ENCODE measurements at regions of chr1 and their contacts with region 1.

Region 1: DNA sequence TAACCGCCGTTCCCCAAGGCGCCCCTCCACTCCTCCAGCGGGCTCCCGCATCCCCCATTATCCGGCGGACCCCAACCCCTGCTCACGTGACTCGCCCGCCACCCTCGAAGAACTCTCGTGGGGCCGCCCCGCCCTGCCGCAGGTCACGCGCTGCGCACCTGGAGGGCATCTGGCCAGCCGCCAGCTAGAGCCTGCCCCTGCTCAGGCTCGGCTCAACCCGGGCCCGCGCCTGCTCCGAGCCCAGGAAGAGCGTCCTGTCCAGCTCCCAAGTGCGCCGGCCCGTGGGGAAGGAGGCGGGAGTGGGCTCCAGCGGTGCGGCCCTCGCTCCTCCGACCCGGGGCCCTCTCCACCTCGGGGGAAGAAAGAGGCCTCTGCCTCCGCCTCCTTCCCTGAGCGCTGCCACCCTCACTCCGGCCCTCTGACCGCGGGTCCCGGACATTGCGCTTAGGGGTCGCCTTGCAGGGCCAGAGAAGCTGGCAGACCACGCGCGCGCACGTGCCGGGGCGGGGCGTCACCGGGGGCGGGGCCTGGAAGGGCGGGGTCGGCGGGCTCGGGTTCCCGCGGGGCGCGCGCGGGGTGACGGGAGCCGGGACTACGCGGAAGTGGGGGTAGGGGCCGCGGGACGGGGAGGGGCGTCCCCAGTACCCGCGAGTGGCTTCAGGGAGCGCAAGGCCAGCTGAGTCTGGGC is 28.4 kb downstream of the HMGN2 start:
- DNase-seq: peak; percentile 91
- ATAC-seq: peak; percentile 78
- H3K4me3 Mint-ChIP-seq: peak overlapping the region; percentile 90
- H3K27ac Mint-ChIP-seq: peak overlapping the region; percentile 94
- H3K4me1 Mint-ChIP-seq: peaks cover 17% of the 10 kb centered on the region
- H3K27me3 Mint-ChIP-seq: no peaks in the 10 kb centered on the region
- CTCF ChIP-seq: peak; percentile 53

Region 2: DNA sequence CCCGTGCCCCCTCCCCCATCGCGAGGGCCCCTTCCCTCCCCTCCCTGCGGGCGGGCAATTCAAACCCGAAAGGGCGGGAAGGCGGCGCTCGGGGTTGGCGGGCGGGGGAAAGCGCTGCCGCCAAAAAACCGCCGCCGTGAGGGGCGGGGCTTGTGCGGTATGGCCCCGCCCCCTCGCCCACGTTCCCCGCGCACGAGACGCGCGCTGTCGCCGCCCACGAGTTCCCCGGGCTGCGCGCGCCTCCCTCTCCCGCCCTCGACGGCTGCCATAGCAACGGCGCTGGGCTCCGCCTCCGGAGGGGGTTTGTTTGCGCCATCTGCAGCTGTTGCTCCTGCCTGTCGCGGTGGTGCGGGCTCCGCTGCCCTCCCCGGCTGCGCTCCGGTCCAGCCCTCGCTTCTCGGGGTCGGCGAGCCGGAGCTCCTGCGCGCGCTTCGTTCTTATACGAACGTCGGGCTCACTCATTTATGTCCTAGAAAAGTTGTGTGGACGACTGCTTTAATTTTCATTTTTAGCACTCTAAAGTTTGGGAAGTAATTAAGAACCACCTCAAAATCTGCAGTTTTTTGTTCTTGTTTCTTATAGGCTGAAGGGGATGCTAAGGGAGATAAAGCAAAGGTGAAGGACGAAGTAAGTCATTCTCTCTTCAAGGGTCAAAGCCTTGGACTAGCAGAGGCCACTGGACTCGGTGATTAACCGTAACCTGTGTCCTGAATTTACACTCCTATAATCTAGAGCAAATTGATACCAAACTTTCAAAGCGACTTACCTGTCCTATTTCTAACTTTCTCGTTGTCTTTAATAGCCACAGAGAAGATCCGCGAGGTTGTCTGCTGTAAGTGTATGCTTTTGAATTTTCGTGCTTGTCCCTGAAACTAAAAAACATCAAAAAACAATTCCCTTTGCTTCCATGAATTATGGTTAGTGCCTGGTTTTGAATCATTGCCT is 27.5 kb before region 1 on chr1:
- CTCF ChIA-PET with region 1: interaction called, 7 read pairs
- POLR2A ChIA-PET with region 1: interaction called, 24 read pairs
- intact Hi-C with region 1: no loop called
- DNase-seq: peak; percentile 94
- ATAC-seq: peak; percentile 71
- H3K4me3 Mint-ChIP-seq: peak overlapping the region; percentile 89
- H3K27ac Mint-ChIP-seq: peak overlapping the region; percentile 40
- H3K4me1 Mint-ChIP-seq: peaks cover 49% of the 10 kb centered on the region
- H3K27me3 Mint-ChIP-seq: no peaks in the 10 kb centered on the region
- CTCF ChIP-seq: no peak

Region 3: DNA sequence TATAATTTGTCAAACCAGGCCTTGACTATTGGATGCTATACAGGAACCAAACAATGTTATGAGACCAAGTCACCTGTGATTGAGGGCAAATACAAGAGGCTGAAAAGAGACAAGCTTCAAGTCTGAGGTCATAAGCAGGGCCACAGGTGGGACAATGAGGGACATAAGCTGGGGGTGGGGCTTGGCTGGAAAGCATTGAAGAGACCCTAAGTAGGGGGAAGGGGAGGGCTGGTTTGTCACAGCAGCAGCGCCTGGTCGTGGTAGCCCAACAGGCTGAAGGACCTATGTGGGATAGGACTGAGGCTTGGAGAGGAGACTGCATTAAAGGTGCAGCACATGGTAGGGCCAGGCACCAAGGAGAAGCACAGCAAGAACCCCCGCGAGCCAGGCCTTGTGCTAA is 10.5 kb before region 1 on chr1:
- CTCF ChIA-PET with region 1: interaction called, 18 read pairs
- POLR2A ChIA-PET with region 1: interaction called, 13 read pairs
- intact Hi-C with region 1: no loop called
- DNase-seq: no peak
- ATAC-seq: no peak
- H3K4me3 Mint-ChIP-seq: no peak overlapping the region
- H3K27ac Mint-ChIP-seq: no peak overlapping the region
- H3K4me1 Mint-ChIP-seq: peaks cover 2% of the 10 kb centered on the region
- H3K27me3 Mint-ChIP-seq: no peaks in the 10 kb centered on the region
- CTCF ChIP-seq: no peak

Region 4: DNA sequence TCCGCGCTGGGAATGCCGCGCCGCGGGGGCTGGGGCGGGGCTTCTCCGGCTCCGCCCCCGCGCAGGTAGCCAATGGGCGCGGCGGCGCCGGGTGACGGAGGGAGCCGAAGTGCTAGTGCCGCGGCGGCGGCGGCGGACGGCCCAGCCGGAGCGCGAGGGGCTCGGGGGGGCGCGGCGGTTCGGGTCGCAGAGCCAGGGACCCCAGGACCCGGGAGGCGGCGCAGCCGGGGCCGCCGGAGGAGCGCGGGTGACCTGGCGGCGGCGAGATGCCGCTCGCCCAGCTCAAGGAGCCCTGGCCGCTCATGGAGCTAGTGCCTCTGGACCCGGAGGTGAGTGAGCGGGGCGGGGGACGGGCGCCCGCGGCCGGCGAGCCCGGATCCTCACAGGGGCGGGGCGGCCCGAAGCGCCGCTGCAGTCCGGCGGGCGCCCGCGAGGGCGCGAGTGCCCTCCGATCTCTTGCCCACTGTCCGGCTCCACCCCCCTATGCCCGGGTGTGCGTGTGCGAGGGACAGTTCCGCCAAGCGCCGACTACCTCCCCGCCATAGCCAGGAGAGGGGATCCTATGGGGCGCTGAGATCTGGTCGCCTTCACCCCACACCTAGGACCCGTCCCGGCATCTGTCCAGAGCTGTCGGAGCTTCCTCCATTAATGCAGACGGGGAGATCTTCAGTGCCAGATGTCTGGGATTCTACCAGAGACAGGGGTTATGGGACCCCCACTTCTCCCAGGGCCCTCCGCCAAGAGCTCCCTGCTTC is 29.2 kb after region 1 on chr1 and contains the start of gene RPS6KA1:
- CTCF ChIA-PET with region 1: interaction called, 13 read pairs
- POLR2A ChIA-PET with region 1: interaction called, 12 read pairs
- intact Hi-C with region 1: no loop called
- DNase-seq: peak; percentile 61
- ATAC-seq: peak; percentile 94
- H3K4me3 Mint-ChIP-seq: peak within 1 kb of the TSS; percentile 82
- H3K27ac Mint-ChIP-seq: peak within 1 kb of the TSS; percentile 84
- H3K4me1 Mint-ChIP-seq: peaks cover 22% of the 10 kb centered on the region
- H3K27me3 Mint-ChIP-seq: peaks cover 3% of the 10 kb centered on the region
- CTCF ChIP-seq: no peak
- total RNA-seq, gene RPS6KA1: 139 TPM

Region 5: GRCh38 chr1:26541816-26542711 is 41.4 kb after region 1 on chr1:
- CTCF ChIA-PET with region 1: interaction called, 54 read pairs
- POLR2A ChIA-PET with region 1: interaction called, 9 read pairs
- intact Hi-C with region 1: loop called (anchors 2 kb)
- DNase-seq: peak; percentile 96
- ATAC-seq: peak; percentile 78
- H3K4me3 Mint-ChIP-seq: peak overlapping the region; percentile 92
- H3K27ac Mint-ChIP-seq: peak overlapping the region; percentile 97
- H3K4me1 Mint-ChIP-seq: peaks cover 79% of the 10 kb centered on the region
- H3K27me3 Mint-ChIP-seq: no peaks in the 10 kb centered on the region
- CTCF ChIP-seq: peak; percentile 81

Region 6: GRCh38 chr1:26582836-26583460 is 82.3 kb after region 1 on chr1:
- CTCF ChIA-PET with region 1: interaction called, 5 read pairs
- POLR2A ChIA-PET with region 1: interaction called, 16 read pairs
- intact Hi-C with region 1: no loop called
- DNase-seq: peak; percentile 94
- ATAC-seq: peak; percentile 55
- H3K4me3 Mint-ChIP-seq: peak overlapping the region; percentile 9
- H3K27ac Mint-ChIP-seq: peak overlapping the region; percentile 97
- H3K4me1 Mint-ChIP-seq: peaks cover 56% of the 10 kb centered on the region
- H3K27me3 Mint-ChIP-seq: no peaks in the 10 kb centered on the region
- CTCF ChIP-seq: no peak

Region 7: GRCh38 chr1:26864610-26865527 is 364.2 kb after region 1 on chr1:
- CTCF ChIA-PET with region 1: no interaction called
- POLR2A ChIA-PET with region 1: interaction called, 10 read pairs
- intact Hi-C with region 1: no loop called
- DNase-seq: peak; percentile 95
- ATAC-seq: peak; percentile 94
- H3K4me3 Mint-ChIP-seq: peak overlapping the region; percentile 89
- H3K27ac Mint-ChIP-seq: peak overlapping the region; percentile 87
- H3K4me1 Mint-ChIP-seq: peaks cover 20% of the 10 kb centered on the region
- H3K27me3 Mint-ChIP-seq: no peaks in the 10 kb centered on the region
- CTCF ChIP-seq: no peak

Measured in activated CD8-positive, alpha-beta T cell treated with anti-CD3 and anti-CD28 coated beads for 36 hours (primary cell).